ENCODE measurements at regions of chr7 and their contacts with region 1.

Region 1: GRCh38 chr7:13279854-13280435 is 592.5 kb downstream of the ARL4A start:
- DNase-seq: no peak
- CTCF ChIP-seq: no peak

Region 2: DNA sequence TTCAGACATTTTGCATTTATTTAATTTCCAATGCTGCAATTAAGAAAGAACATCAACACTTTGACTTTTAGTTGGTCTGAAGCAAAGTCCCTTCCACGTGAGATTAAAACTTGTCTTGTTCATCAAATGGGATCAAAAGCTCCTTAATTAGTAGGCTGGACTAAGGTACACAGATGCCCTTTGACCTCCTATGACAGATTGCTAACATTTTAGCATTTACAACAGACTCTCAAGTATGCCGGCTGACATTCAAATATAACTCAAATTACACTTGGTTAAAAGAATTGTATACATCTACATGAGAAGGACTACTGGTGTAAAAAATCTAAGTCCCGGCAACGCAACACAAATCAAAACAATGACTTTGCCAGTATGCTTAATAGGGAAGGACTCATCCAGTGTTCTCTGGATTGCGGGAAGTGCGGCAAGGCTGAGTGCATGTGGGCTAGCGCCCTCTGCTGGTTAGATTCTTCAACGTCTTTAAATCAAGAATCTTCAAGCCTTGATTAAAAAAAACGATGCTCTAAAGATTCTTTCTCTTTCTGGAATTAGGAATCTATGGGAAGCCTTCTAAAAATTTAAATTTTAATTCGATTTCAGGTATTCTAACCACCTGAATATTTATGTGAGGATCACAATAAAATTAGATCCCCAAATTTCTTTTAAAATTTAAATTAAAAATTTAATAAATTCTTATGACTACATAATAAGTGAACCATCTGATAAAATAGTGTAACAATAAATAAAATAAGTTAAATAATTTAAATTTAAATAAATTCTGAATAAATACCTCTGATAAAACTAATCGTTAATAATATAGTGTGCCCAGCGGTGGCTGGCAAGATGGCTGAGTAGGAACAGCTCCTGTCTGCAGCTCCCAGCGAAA is 1177.9 kb after region 1 on chr7:
- in situ Hi-C with region 1: loop called (anchors 25 kb)
- DNase-seq: peak; percentile 28
- CTCF ChIP-seq: peak; percentile 66

Region 3: DNA sequence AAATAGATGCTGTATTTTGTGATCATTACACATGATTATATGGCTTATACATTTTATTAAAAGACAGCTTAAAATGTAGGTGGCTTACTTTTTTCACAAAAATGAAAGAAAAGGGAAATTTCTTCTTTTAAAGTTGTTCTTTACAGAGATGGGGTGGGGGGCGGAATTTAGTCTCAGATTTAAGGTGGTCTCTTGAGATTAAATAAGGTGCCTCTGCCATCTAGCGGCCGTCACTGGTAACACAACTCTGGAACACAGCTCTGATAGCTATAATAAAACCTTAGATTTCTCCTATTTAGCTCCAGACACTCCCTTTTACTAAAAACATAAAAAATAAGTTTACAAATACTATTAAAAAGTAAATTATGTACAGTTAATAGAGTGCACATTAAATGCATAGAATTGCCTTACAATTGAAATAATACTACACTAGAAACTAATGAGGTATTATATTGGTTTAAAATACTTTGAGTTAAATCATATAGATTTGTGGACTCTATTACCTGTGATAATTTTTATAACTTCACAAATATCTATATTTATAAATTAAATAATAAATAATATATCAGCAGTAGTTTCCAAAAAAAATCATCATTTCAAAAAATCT is 1411.8 kb after region 1 on chr7:
- in situ Hi-C with region 1: loop called (anchors 25 kb)
- DNase-seq: peak; percentile 27
- CTCF ChIP-seq: peak; percentile 71